ENCODE measurements at regions of chr10 and their contacts with region 1.

Region 1: DNA sequence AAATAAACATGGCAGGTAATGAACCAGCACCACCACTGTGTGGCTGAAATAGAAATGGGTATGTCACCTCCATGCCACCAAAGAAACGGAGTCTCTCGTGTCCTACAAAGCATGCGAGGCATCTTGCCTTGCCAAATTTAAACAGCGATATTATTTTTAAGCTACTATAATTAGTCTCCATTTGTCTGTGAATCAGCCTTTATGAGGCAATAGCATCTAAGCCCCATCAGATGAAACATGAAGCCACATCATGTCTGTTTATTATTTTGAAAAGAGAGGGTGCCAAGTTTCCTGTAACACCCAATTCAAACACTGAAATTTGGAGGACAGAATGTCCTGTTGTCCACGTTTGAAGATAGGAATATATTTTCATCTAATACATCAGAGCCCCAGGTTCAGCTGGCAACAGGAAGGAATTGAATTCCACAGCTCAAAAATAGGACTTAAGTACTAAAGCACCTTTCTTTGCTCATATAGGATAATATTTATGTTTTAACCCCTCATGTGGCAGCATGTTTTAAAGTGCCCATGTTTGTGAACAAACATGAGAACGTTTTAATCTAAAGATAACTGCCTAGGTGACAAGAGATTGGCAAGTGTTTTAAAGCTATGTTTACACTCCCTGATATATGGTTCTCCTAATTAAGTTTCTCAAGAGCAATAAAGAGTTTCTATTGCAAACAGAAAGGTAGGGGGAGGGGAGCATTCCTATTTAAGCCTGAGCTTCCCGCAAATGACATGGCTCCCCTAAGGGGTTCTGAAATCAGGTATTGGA is 86.8 kb downstream of the SORBS1 start:
- DNase-seq: no peak
- ATAC-seq: peak; percentile 78

Region 2: DNA sequence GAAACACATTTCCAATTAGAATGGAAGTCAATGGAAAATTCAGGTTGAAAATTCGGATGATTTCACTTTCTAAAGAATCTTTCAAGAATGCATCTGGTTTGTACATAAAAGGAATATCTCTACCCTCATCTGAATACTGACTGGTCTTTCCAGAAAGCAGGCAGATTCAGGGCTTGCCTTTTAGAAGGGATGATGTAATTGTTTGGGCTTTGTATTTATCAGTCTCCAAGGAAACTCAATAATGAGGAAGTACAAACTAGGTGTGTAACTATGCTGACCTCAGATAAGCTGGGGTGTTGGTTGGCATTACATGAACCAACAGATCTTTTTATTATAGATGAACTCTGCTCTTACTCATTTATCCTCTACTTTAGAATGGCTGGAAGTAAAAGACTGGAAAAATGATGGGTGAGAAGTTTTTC is 207.7 kb before region 1 on chr10:
- intact Hi-C with region 1: no loop called
- DNase-seq: no peak
- ATAC-seq: peak; percentile 79

Region 3: GRCh38 chr10:95430231-95430951 is 44.0 kb before region 1 on chr10:
- intact Hi-C with region 1: loop called (anchors 5 kb)
- DNase-seq: no peak
- ATAC-seq: peak; percentile 68

Region 4: DNA sequence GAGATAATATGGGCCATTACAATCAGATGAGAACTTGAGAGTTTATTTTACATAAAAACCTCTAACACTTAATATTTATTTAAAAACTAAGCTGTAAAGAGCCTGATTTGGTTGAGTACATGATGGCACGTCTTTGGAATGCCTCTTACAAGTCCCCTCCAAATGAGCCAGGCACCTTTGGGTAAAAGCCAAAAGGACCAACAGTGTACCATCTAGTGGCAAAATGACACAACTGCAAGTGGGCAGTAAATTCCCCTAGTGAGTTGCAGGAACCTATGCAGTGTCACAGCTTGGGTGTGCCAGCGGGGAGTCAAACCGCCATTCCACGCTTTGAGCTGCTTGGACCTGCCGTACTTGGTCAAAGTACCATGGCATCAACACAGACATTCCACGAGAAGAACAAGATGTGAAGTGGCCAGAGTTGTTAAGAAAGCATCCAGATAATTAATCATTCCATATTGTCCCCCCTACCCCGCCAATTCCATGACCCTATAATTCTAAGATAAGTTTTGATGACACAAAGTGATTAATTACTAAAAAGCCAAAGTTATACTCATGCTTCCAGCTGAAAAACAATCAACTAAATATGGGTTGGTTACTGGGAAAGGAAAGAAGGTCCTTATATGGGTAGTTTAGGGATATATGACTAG is 28.5 kb before region 1 on chr10:
- intact Hi-C with region 1: loop called (anchors 2 kb)
- DNase-seq: no peak
- ATAC-seq: peak; percentile 55

Region 5: DNA sequence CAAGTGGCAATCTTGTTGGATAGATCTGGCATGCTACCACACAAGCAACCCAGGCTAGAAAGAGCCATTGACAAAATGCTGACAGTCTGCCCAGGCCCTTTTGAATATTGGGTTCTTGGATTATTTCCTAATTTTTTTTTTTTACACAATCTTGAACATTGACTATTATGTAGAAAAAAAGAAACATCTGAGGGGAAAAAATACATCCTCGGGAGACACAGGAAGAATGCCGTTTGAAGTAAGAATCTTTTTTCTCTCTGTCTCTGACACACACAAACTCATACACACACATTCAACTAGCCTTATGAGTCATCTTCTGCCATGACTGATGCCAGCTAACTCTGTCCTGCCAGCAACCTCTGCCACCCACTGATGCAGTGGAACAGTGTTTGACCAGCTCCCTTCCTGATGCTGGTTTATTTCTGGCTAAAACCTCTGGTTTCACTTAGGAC is 39.6 kb after region 1 on chr10:
- intact Hi-C with region 1: loop called (anchors 5 kb)
- DNase-seq: no peak
- ATAC-seq: peak; percentile 59

Region 6: DNA sequence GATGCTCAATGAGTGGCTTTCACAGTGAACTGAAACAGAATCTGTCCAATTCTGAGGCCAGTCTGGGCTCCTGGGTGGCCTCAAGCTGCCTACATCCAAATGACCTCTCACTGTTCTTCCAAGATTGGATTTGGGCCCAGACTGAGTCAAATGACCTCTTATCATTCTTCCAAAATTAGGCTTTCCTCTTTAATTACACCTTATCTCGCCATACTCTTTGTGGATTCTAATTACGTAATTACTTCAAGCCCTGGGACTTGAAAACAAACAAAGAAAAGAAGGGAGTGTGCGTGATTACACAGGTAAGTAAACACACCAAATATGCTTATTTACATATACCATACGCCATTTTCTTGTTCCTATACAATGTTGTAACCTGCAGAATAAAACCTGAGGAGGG is 67.9 kb after region 1 on chr10:
- intact Hi-C with region 1: loop called (anchors 2 kb)
- DNase-seq: no peak
- ATAC-seq: peak; percentile 70

Region 7: GRCh38 chr10:95561182-95562075 is 87.0 kb after region 1 on chr10 and contains the start of gene SORBS1:
- intact Hi-C with region 1: loop called (anchors 2 kb)
- DNase-seq: peak; percentile 98
- ATAC-seq: peak; percentile 99
- total RNA-seq, gene SORBS1: 666 TPM

Region 8: GRCh38 chr10:95601116-95601719 is 126.8 kb after region 1 on chr10:
- intact Hi-C with region 1: loop called (anchors 5 kb)
- DNase-seq: no peak
- ATAC-seq: peak; percentile 93

Region 9: DNA sequence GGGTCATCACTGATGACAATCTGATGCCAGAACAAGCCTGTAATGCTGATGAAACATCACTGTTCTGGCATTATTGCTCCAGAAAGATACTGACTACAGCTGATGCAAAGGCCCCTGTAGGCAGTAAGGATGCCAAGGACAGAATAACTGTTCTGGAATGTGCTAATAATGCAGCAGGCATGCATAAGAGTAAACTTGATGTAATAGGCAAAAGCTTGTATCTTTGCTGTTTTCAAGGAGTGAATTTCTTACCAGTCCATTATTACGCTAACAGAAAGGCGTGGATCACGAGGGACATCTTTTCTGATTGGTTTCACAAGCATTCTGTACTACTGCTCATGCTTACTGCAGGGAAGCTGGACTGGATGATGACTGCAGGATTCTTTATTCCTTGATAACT is 1376.4 kb after region 1 on chr10:
- intact Hi-C with region 1: no loop called
- DNase-seq: no peak
- ATAC-seq: peak; percentile 80

Measured in Right ventricle myocardium inferior (tissue), 1 donor.